IMR-90 (cell line): ENCODE measurements at regions of chrX and their contacts with region 1.

Region 1: DNA sequence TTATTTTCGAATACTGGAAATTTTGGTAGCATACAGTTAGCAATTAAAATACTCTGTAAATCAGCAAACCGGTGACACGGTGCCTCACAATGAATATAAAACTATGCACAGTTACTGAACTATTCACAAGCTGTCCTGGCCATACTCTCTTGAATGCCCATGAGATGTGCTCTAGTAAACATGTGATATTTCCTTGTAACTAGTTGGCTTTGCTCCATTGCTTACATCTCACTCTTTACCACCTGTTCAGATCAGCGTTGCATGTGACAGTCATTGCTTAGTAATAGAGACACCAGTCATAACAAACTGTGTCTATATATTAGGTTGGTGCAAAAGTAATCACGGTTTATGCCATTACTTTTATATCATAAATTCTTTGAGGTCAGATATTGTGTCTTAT is 897.9 kb upstream of the FTHL17 start:
- DNase-seq: no peak
- ATAC-seq: no peak
- H3K4me3 ChIP-seq: no peak overlapping the region
- H3K27ac ChIP-seq: no peak overlapping the region
- H3K4me1 ChIP-seq: no peaks in the 10 kb centered on the region
- H3K27me3 ChIP-seq: no peaks in the 10 kb centered on the region
- CTCF ChIP-seq: no peak
- POLR2A ChIP-seq: no peak
- RAD21 ChIP-seq: no peak

Region 2: GRCh38 chrX:31909850-31910547 is 59.7 kb before region 1 on chrX:
- CTCF ChIA-PET with region 1: no interaction called
- POLR2A ChIA-PET with region 1: no interaction called
- dilution Hi-C with region 1: no loop called
- in situ Hi-C with region 1: no loop called
- intact Hi-C with region 1: loop called (anchors 10 kb)
- DNase-seq: no peak
- ATAC-seq: no peak
- H3K4me3 ChIP-seq: no peak overlapping the region
- H3K27ac ChIP-seq: no peak overlapping the region
- H3K4me1 ChIP-seq: no peaks in the 10 kb centered on the region
- H3K27me3 ChIP-seq: no peaks in the 10 kb centered on the region
- CTCF ChIP-seq: no peak
- POLR2A ChIP-seq: no peak
- RAD21 ChIP-seq: no peak